Ovary (tissue), 10 donors: ENCODE measurements at regions of chr2 and their contacts with region 1.

Region 1: GRCh38 chr2:73071360-73072133 is at the start of gene SFXN5:
- DNase-seq: peak; percentile 97 to 99 (median 98)
- H3K4me3 ChIP-seq: peak within 1 kb of the TSS; percentile 70
- H3K27ac ChIP-seq: peak within 1 kb of the TSS; percentile 36 to 80
- H3K4me1 ChIP-seq: peaks cover 3% of the 10 kb centered on the region
- H3K27me3 ChIP-seq: no peaks in the 10 kb centered on the region
- CTCF ChIP-seq: peak; percentile 22 to 46 (median 44)
- EP300 ChIP-seq: no peak
- POLR2A ChIP-seq: no peak
- total RNA-seq, gene SFXN5: 7.7 to 19.3 (median 11.6) TPM

Region 2: GRCh38 chr2:72973566-72974435 is 97.7 kb before region 1 on chr2:
- intact Hi-C with region 1: no loop called
- DNase-seq: no peak
- H3K4me3 ChIP-seq: no peak overlapping the region
- H3K27ac ChIP-seq: no peak overlapping the region
- H3K4me1 ChIP-seq: no peaks in the 10 kb centered on the region
- H3K27me3 ChIP-seq: no peaks in the 10 kb centered on the region
- CTCF ChIP-seq: peak in 1 of 3 donors; percentile 7
- EP300 ChIP-seq: no peak
- POLR2A ChIP-seq: no peak

Region 3: DNA sequence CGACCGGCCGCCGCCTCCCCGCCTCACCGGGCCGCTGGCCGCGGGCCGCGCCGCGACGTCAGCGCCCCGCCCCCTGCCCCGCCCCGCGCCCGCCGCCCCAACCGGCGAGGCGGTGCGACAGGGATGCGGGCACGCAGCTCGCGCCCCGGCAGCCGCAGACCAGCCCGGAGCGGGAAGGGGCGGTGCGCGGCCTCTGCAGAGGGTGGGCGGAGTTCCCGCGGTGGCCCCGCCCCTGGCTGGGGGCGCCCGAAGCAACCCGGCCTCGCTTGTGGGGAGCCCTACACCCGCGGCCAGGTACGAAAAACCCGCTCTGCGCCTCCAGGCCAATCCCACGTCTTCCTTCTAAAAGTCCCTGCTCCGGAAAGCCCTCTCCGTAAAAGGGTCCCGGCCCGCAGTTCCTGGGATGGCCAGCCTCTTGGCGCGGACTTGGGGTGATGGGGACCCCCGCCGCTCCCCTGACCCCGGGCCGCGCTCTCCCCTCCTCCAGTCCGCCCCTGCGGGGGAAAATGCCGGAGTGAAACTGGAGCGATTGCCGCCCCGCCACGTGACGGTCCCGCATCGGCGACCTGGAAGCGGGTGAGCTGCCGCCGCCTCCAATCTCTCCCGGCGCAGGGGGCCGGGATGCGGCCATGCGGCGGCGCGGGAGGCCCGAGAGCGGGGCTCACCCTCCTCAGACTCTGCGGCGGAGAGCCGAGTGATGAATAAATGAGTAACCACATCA is 41.5 kb after region 1 on chr2 and contains the start of gene RAB11FIP5:
- intact Hi-C with region 1: loop called in 1 of 4 experiments (anchors 5 kb)
- DNase-seq: peak; percentile 79 to 88 (median 85)
- H3K4me3 ChIP-seq: peak within 1 kb of the TSS; percentile 71
- H3K27ac ChIP-seq: peak within 1 kb of the TSS; percentile 82 to 85
- H3K4me1 ChIP-seq: peaks cover 7% of the 10 kb centered on the region
- H3K27me3 ChIP-seq: no peaks in the 10 kb centered on the region
- CTCF ChIP-seq: peak in 2 of 3 donors; percentile 13 to 28
- EP300 ChIP-seq: no peak
- POLR2A ChIP-seq: peak; percentile 26
- total RNA-seq, gene RAB11FIP5: 16.1 to 33.2 (median 25.0) TPM

Region 4: GRCh38 chr2:73324126-73324725 is 252.7 kb after region 1 on chr2:
- intact Hi-C with region 1: no loop called
- DNase-seq: no peak
- H3K4me3 ChIP-seq: no peak overlapping the region
- H3K27ac ChIP-seq: no peak overlapping the region
- H3K4me1 ChIP-seq: no peaks in the 10 kb centered on the region
- H3K27me3 ChIP-seq: no peaks in the 10 kb centered on the region
- CTCF ChIP-seq: no peak
- EP300 ChIP-seq: no peak
- POLR2A ChIP-seq: no peak